Upper lobe of right lung (tissue), 1 donor: ENCODE measurements at regions of chr2 and their contacts with region 1.

Region 1: GRCh38 chr2:68751397-68752339 is 17.1 kb downstream of the ARHGAP25 start:
- DNase-seq: peak; percentile 94
- ATAC-seq: peak; percentile 98
- H3K4me3 ChIP-seq: no peak overlapping the region
- H3K27ac ChIP-seq: peak overlapping the region; percentile 14
- H3K4me1 ChIP-seq: peaks cover 45% of the 10 kb centered on the region
- H3K27me3 ChIP-seq: no peaks in the 10 kb centered on the region
- CTCF ChIP-seq: peak; percentile 96

Region 2: GRCh38 chr2:68632021-68632420 is 119.6 kb before region 1 on chr2:
- intact Hi-C with region 1: no loop called
- DNase-seq: no peak
- ATAC-seq: no peak
- H3K4me3 ChIP-seq: no peak overlapping the region
- H3K27ac ChIP-seq: no peak overlapping the region
- H3K4me1 ChIP-seq: no peaks in the 10 kb centered on the region
- H3K27me3 ChIP-seq: peaks cover 5% of the 10 kb centered on the region
- CTCF ChIP-seq: no peak

Region 3: GRCh38 chr2:68700560-68700959 is 51.1 kb before region 1 on chr2:
- intact Hi-C with region 1: no loop called
- DNase-seq: no peak
- ATAC-seq: no peak
- H3K4me3 ChIP-seq: no peak overlapping the region
- H3K27ac ChIP-seq: no peak overlapping the region
- H3K4me1 ChIP-seq: no peaks in the 10 kb centered on the region
- H3K27me3 ChIP-seq: no peaks in the 10 kb centered on the region
- CTCF ChIP-seq: no peak

Region 4: DNA sequence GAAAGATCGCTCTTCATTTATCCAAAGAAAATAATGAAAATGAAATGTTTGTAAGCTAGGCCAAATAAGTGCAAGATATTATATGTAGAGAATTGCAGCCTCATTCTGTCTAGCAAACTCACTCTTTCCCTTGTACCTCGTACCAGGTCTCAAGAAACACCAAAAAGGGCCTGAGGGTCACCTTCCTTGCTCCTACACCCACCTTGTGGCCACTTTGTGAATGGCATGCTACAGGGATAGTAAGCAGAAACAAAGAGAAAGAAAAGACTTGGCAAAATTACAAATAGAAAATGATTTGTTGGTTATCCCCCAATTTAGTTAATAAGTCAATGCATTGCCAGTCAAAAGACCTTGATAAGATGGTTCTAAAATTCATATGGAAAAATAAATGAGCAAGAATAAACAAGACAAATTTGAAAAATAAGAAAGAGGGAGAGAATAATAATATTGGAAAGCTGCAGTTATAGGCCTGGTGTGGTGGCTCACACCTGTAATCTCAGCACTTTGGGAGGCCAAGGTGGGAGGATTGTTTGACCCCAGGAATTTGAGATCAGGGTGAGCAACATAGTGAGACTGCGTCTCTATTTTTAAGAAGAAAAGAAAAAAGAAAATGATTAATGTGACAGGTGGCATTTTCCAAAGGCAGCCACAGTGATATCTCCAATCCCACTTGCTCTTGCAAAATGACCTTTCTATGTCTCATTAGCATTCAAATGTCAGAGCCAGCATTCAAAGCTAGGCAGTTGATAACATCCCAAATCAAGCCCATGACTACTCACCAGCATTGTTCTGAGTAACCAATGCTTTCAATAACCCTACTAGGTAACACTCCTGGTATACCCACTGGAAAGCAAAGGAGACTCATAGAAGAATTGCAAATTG is 158.4 kb after region 1 on chr2:
- intact Hi-C with region 1: loop called (anchors 5 kb)
- DNase-seq: no peak
- ATAC-seq: peak; percentile 82
- H3K4me3 ChIP-seq: no peak overlapping the region
- H3K27ac ChIP-seq: no peak overlapping the region
- H3K4me1 ChIP-seq: peaks cover 18% of the 10 kb centered on the region
- H3K27me3 ChIP-seq: no peaks in the 10 kb centered on the region
- CTCF ChIP-seq: peak; percentile 93

Region 5: DNA sequence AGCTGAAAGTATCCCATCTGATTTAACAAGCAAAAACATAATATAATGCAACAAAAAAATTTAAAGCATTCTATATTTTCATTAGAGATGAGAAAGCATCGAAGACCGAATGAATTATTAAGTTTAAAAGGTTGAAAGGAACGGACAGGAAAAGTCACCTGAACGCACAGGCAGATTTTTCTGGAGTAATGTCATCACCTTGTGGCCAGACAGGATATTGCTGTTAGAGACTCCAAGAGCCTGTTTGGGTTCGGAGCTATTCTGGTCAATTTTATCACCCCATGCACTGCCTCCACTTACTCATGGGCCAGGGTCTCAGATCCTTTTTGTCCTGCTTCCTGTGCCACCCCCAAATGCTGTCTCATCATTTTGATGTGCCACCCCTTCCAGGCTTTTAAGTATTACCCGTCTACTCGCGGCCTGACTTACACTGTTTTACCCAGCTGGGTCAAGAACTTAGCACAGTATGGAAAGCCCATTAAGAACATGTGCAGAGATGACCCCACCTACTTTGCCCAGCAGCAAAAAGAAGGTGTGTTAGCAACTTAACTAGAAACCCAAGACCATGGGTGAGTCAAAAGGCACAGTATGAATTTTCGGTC is 173.7 kb after region 1 on chr2:
- intact Hi-C with region 1: loop called (anchors 5 kb)
- DNase-seq: no peak
- ATAC-seq: peak; percentile 86
- H3K4me3 ChIP-seq: no peak overlapping the region
- H3K27ac ChIP-seq: no peak overlapping the region
- H3K4me1 ChIP-seq: no peaks in the 10 kb centered on the region
- H3K27me3 ChIP-seq: no peaks in the 10 kb centered on the region
- CTCF ChIP-seq: peak; percentile 88